ENCODE measurements at regions of chr17 and their contacts with region 1.

Region 1: GRCh38 chr17:4997302-4998026 is at the starts of genes INCA1 and KIF1C:
- DNase-seq: peak; percentile 89
- H3K4me3 Mint-ChIP-seq: peak within 1 kb of the TSS; percentile 90
- H3K27ac Mint-ChIP-seq: peak within 1 kb of the TSS; percentile 90
- H3K4me1 Mint-ChIP-seq: peaks cover 19% of the 10 kb centered on the region
- H3K27me3 Mint-ChIP-seq: peaks cover 8% of the 10 kb centered on the region
- total RNA-seq, gene INCA1: 0.34 and 0.37 TPM in 2 replicates
- total RNA-seq, gene KIF1C: 68.4 and 71.3 TPM in 2 replicates

Region 2: DNA sequence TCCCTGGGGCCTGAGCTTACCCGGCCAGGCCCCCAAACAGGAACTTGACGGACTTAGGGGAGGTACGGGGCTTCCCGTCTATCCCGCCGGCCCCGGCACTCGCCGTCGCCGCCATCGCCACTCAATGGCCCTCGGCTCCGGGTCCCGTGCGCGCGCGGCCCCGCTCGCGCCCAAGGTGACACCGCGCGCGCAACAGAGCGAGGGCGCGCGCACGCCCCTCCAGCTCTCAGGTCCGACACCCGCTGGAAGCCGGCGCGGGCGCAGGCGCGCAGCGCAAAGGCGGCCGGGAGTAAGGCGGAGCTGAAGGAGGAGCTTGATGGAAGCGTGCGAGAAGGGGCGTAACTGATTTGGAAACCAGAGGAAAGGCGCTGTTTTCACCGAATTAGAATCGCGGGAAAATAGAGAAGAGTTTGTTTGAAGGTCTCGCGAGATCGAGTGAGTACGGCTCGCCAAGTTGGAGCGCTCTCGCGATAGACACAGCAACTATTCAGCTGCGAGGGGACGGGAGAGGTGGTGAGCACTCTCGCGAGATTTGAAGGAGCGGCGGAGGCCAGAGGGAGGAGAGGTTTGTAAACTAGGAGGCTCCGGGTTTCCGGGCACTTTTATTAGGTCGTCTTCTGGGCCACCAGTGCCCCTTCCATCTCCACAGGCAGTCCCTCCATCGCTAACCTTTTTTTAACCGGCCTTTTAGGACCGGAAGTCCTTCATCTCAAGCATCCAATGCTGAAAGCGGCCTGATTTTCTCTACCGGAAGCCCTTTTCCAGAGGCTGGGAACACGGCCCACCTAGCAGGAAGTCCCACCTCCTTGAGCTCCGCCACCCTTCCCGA is 57.5 kb before region 1 on chr17 and contains the starts of genes RNF167 and SLC25A11:
- intact Hi-C with region 1: loop called (anchors 2 kb)
- DNase-seq: peak; percentile 98
- H3K4me3 Mint-ChIP-seq: peak within 1 kb of the TSS; percentile 100
- H3K27ac Mint-ChIP-seq: peak within 1 kb of the TSS; percentile 94
- H3K4me1 Mint-ChIP-seq: peaks cover 56% of the 10 kb centered on the region
- H3K27me3 Mint-ChIP-seq: no peaks in the 10 kb centered on the region
- total RNA-seq, gene RNF167: 138 and 140 TPM in 2 replicates
- total RNA-seq, gene SLC25A11: 111 and 116 TPM in 2 replicates

Region 3: DNA sequence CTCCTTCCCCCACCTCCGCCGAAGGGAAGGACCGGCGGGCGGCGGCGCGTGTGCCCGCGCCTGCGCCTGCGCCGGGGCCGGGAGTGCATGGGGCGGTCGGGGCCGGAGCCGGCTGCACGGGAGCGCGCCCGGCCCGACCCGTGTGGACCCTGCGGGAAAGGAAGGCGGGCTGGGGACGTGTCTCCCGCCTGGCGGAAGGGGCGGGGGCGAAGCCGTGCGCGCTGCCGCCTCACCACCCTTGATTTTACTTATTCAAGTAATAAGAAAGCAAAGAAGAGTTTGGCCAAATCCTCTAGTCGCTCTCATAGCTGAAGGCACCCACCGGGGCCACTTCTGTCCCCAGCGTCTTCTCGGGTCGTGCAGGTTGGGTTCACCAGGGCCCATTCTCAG is 48.5 kb before region 1 on chr17:
- intact Hi-C with region 1: loop called (anchors 1 kb)
- DNase-seq: peak; percentile 77
- H3K4me3 Mint-ChIP-seq: peak overlapping the region; percentile 97
- H3K27ac Mint-ChIP-seq: peak overlapping the region; percentile 100
- H3K4me1 Mint-ChIP-seq: peaks cover 49% of the 10 kb centered on the region
- H3K27me3 Mint-ChIP-seq: peaks cover 2% of the 10 kb centered on the region

Region 4: GRCh38 chr17:4980644-4981216 is 16.7 kb before region 1 on chr17:
- intact Hi-C with region 1: loop called (anchors 2 kb)
- DNase-seq: peak; percentile 42
- H3K4me3 Mint-ChIP-seq: no peak overlapping the region
- H3K27ac Mint-ChIP-seq: peak overlapping the region; percentile 56
- H3K4me1 Mint-ChIP-seq: peaks cover 20% of the 10 kb centered on the region
- H3K27me3 Mint-ChIP-seq: no peaks in the 10 kb centered on the region

Region 5: DNA sequence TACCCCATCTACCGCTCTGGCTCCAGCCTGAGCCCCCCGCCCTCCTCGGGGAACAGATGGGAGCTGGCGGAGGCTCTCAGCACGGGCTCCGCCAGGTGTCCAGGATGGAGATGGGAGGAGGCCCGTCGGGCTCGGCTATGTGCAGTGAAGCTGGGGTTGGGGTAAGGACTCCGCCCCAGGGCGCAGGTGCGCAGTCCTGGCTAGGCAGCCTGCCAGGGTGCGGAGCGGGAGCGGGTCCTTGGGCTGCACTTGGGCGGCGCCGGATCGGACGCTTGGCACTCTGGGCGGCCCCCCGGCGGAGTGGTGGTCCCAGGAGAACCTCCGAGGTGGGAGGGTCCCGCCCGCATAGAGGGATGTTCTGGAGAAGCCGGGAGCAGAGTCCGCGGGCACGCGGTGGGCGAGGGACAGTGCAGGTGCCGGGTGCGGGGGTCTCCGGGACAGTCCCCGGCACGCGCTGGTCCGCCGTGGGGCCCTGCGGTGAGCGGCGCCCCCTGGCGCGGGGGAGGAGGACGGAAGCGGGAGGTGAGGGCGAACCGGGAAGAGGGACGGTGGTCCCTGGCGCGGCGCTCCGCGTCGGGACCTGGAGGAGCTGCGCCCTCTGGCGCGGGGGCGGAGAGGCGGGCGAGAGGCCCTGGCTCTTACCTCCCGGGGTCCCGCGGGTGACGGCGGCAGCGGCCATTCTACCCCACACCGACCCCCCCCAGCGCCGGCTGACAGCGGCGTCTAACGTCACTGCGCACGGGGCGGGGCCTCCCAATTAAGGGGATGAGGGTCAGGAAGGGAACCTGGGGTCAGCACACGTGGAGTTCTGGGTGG is 10.3 kb before region 1 on chr17 and contains the start of gene CAMTA2:
- intact Hi-C with region 1: loop called (anchors 1 kb)
- DNase-seq: peak; percentile 82
- H3K4me3 Mint-ChIP-seq: peak within 1 kb of the TSS; percentile 95
- H3K27ac Mint-ChIP-seq: peak within 1 kb of the TSS; percentile 89
- H3K4me1 Mint-ChIP-seq: peaks cover 39% of the 10 kb centered on the region
- H3K27me3 Mint-ChIP-seq: no peaks in the 10 kb centered on the region
- total RNA-seq, gene CAMTA2: 98.5 and 103 TPM in 2 replicates

Region 6: GRCh38 chr17:5126721-5127488 is 129.4 kb after region 1 on chr17:
- intact Hi-C with region 1: no loop called
- DNase-seq: no peak
- H3K4me3 Mint-ChIP-seq: no peak overlapping the region
- H3K27ac Mint-ChIP-seq: no peak overlapping the region
- H3K4me1 Mint-ChIP-seq: no peaks in the 10 kb centered on the region
- H3K27me3 Mint-ChIP-seq: peaks cover 9% of the 10 kb centered on the region

Region 7: DNA sequence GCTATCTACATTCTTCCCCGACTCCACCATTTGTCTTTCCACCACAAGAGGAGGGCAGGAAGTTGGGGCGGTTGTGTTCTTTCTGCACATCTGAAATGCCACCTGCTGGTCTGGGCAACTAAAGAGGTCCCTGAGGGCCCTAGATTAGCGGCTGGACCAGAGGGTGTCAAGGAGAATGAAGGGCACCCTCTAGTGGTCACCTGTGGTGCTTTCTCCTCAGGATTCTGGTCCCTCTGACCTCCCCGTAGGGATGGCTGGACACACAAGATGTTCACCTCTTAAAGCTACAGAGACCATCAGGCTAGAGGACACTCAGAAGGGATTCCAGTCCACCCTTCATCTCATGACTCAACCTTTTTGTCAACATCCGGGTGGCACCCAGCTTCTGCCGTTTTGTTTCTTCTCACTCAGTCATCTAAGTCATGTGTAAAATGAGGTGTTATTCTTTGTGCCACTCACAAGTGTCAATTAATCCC is 240.1 kb after region 1 on chr17:
- intact Hi-C with region 1: no loop called
- DNase-seq: peak; percentile 15
- H3K4me3 Mint-ChIP-seq: no peak overlapping the region
- H3K27ac Mint-ChIP-seq: no peak overlapping the region
- H3K4me1 Mint-ChIP-seq: peaks cover 15% of the 10 kb centered on the region
- H3K27me3 Mint-ChIP-seq: peaks cover 2% of the 10 kb centered on the region

Region 8: DNA sequence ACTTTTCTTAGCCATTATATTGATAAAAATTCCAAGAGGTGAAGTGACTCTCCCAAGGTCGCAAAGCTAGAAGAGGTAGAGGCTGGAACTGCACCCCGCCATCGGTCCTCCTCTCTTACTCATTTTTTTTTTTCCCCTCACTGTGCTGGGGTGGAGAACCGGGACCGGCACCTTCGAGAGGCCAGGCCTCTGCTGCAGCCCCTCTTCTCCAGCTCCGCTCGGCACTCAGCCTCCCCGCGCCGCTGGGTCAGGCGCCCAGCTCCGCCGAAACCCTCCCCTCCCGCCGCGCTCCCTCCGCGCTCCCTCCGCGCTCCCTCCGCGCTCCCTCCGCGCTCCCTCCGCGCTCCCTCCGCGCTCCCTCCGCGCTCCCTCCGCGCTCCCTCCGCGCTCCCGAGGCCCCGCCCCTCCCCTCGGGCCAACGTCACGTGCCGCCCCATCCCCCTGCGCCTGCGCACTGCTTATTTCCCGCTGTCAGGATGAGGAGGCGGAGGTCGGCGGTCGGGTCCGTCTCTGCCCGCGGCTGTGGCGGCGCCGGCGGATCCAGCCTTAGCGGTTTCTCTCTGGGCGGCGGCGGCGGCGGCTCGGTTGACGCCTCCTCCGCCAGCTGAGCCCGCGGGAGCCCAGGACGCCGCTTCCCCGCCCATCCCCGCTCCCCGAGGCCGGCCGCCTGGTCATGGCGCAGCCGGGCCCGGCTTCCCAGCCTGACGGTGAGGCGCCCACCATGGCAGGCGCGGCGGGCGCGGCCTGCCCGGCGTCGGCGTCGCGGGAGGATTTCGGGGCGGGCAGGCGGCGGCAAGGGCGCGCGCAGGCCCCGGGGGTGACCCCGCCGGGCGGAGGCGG is 284.6 kb after region 1 on chr17 and contains the start of gene RABEP1:
- intact Hi-C with region 1: loop called (anchors 5 kb)
- DNase-seq: peak; percentile 92
- H3K4me3 Mint-ChIP-seq: peak within 1 kb of the TSS; percentile 90
- H3K27ac Mint-ChIP-seq: peak within 1 kb of the TSS; percentile 91
- H3K4me1 Mint-ChIP-seq: peaks cover 28% of the 10 kb centered on the region
- H3K27me3 Mint-ChIP-seq: peaks cover 3% of the 10 kb centered on the region
- total RNA-seq, gene RABEP1: 50.2 and 51.4 TPM in 2 replicates

Measured in activated T-helper 1 cell treated with anti-CD3 and anti-CD28 coated beads, Interleukin-12 subunit alpha, Interleukin-12 subunit beta, Interleukin-2, Interleukin-4 antibody, amounts not matched to agents 30 ng/mL and 10 ng/mL and 1 ng/mL, durations not matched to agents 14 hours and 24 hours and 36 hours (primary cell).